Activated T-helper 1 cell treated with anti-CD3 and anti-CD28 coated beads, Interleukin-12 subunit alpha, Interleukin-12 subunit beta, Interleukin-2, Interleukin-4 antibody, amounts not matched to agents 30 ng/mL and 10 ng/mL and 1 ng/mL, durations not matched to agents 14 hours and 24 hours and 36 hours (primary cell): ENCODE measurements at regions of chr1 and their contacts with region 1.

Region 1: DNA sequence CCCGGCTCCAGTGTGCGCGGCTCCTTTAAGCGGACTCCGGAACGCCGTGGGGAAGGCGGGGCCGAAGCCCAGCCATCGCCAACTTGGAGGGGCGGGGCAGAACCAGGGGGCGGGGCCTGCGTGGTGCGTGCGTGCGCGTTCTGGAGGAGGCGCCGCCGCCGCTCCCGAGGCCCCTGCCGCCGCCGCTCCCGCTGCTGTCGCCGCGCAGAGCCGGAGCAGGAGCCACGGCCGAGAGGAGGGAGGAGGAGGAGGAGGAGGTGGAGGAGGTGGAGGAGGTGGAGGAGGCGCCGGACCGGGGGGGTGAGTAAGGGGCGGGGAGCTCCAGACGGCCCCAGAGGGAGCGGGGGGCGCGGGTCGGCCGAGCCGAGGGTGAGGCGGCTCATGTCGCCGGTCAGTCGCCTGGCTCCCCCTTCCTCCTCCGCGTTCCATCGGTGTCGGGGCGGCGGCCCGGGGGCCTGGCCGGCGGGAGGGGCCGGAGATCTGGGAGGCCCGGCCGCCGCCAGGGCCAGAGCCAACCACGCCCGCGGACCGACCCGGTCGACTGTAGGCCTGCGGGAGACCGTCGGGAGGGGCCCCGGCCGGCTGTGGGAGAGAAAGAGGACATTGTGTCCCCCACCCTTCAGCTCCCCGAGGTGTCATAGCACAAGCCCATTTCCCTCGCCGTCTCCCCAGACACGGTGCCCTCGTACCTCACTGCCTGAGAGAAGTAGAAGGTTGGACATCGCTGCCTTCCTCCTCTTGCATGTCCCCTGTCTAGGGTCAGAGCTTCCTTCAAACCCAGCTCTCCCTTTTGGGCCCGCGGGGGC is at the start of gene RAP1A:
- DNase-seq: peak; percentile 88
- H3K4me3 Mint-ChIP-seq: peak within 1 kb of the TSS; percentile 99
- H3K27ac Mint-ChIP-seq: peak within 1 kb of the TSS; percentile 93
- H3K4me1 Mint-ChIP-seq: peaks cover 76% of the 10 kb centered on the region
- H3K27me3 Mint-ChIP-seq: no peaks in the 10 kb centered on the region
- total RNA-seq, gene RAP1A: 326 and 348 TPM in 2 replicates

Region 2: DNA sequence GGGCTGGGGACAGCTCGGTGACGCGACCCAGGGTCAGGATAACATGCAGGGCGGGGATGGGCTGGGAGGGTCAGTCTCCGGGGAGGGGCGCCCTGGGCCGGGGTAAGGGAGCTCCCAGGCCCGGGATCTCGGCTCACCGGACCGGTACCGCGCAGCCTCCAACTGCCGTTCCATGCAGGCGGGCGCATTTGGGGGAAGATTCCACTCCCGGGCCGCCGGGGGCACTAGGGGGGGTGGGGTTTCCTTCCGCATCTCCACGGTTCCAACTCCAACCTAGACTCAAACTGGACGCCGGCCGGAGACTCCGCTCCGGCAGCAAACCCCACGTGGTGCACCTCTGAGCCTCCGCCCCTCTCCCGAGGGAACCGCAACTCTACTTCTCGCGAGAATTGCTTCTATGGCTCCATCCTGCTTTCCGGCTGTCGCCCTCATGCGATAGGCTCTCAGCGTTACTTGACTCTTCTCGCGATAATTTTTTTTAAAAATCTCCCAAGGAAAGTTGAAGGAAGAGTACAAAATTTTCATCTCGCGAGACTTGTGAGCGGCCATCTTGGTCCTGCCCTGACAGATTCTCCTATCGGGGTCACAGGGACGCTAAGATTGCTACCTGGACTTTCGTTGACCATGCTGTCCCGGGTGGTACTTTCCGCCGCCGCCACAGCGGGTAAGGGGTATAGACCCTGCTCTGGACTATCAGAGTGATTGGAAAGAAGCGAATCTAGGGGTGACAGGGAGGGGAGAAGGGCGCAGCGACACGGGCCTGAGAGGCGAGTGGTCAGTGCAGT is 170.7 kb before region 1 on chr1 and contains the starts of genes ATP5PB and WDR77:
- intact Hi-C with region 1: loop called (anchors 1 kb)
- DNase-seq: peak; percentile 91
- H3K4me3 Mint-ChIP-seq: peak within 1 kb of the TSS; percentile 100
- H3K27ac Mint-ChIP-seq: peak within 1 kb of the TSS; percentile 96
- H3K4me1 Mint-ChIP-seq: peaks cover 74% of the 10 kb centered on the region
- H3K27me3 Mint-ChIP-seq: no peaks in the 10 kb centered on the region
- total RNA-seq, gene ATP5PB: 280 and 282 TPM in 2 replicates
- total RNA-seq, gene WDR77: 61.3 and 62.5 TPM in 2 replicates

Region 3: GRCh38 chr1:111559736-111560279 is 60.0 kb before region 1 on chr1:
- intact Hi-C with region 1: loop called (anchors 1 kb)
- DNase-seq: no peak
- H3K4me3 Mint-ChIP-seq: no peak overlapping the region
- H3K27ac Mint-ChIP-seq: no peak overlapping the region
- H3K4me1 Mint-ChIP-seq: peaks cover 13% of the 10 kb centered on the region
- H3K27me3 Mint-ChIP-seq: peaks cover 13% of the 10 kb centered on the region

Region 4: GRCh38 chr1:111603979-111604378 is 15.9 kb before region 1 on chr1:
- intact Hi-C with region 1: loop called (anchors 1 kb)
- DNase-seq: peak; percentile 82
- H3K4me3 Mint-ChIP-seq: peak overlapping the region; percentile 80
- H3K27ac Mint-ChIP-seq: peak overlapping the region; percentile 97
- H3K4me1 Mint-ChIP-seq: peaks cover 74% of the 10 kb centered on the region
- H3K27me3 Mint-ChIP-seq: no peaks in the 10 kb centered on the region

Region 5: DNA sequence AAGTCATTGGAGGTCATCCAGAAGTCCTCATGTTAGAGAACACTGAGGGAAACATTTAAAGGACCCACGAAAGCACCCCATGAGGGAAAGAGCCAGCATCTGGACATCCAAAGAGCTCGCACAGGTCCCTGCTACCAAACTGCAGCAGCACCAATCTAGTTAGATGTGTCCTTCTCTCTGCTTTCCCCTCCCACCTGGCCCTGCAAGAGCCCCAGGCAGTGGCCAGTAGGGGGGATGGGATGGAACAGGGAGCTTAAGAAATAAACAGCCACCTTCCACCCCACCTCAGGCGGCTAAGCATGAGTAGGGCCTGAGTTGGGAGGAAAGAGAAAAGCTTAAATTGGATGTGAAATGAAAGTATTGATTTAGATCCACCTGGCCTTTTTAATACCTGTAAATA is 545.5 kb after region 1 on chr1:
- intact Hi-C with region 1: no loop called
- DNase-seq: no peak
- H3K4me3 Mint-ChIP-seq: no peak overlapping the region
- H3K27ac Mint-ChIP-seq: no peak overlapping the region
- H3K4me1 Mint-ChIP-seq: no peaks in the 10 kb centered on the region
- H3K27me3 Mint-ChIP-seq: peaks cover 2% of the 10 kb centered on the region